H1 (cell line): ENCODE measurements at regions of chr6 and their contacts with region 1.

Region 1: DNA sequence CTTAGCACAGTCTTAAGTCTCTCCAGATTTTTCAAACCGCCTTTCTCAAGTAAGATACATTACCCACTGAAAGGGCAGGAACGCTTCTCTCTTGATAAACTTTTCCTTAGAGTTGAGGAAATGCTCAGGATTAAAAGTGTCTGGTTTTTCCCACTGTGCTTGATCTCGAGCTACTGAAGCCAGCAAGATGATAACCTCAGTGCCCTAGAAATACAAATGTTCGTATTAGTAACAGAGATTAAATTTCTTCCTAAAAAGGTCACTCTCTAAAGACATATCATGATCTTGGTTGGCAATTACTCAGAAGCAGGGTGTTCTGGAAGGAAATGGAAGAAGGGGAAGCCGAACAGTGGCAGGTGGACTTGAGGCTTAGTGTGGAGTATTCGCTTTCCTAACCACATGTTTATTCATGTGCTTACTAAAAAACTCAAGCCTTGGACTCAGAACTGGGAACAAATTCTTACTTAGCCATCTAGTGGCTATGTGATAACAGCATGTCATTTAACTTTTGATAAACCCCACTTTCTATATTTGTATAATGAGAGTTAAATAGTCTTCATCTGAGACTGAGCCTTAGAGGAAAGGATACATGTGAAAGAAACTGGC is 20.1 kb downstream of the C6orf141 start:
- DNase-seq: no peak
- H3K4me3 ChIP-seq: no peak overlapping the region
- H3K27ac ChIP-seq: no peak overlapping the region
- H3K4me1 ChIP-seq: no peaks in the 10 kb centered on the region
- H3K27me3 ChIP-seq: no peaks in the 10 kb centered on the region; a peak in 1 of 7 replicates
- CTCF ChIP-seq: no peak
- EP300 ChIP-seq: no peak
- POLR2A ChIP-seq: no peak
- RAD21 ChIP-seq: no peak

Region 2: DNA sequence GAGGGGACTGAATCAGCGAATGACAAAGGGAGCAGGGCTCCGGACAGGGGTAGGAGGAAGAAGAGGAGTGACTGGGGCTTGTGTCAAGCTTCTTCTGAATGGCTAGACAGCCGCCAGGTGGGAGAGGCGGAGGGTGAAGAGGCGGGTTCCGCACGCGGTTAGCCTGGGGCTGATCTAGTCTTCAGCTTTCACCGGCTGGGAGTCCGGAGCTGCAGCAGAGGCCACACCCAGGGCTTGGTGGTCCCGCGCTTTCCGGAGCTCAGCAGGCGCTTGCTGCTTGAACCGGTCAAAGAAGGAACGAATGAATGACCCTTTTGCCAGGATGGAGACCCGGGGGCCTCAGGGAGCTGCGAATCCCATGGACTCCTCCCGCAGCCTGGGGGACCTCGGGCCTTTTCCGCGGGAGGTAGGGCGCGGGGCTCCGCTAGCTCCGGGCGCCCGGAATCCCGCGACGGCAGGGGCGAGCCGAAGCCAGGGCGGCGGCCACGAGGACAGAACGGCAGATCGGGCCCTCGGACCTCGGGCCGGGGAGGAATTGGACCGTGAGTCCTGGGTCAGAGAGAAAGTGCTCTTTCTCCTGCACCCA is 20.0 kb before region 1 on chr6 and contains the start of gene C6orf141:
- CTCF ChIA-PET with region 1: interaction called, 23 read pairs
- POLR2A ChIA-PET with region 1: interaction called, 5 read pairs
- DNase-seq: peak; percentile 74 to 81
- H3K4me3 ChIP-seq: peak within 1 kb of the TSS; percentile 69 to 97 (median 79)
- H3K27ac ChIP-seq: peak within 1 kb of the TSS; percentile 76
- H3K4me1 ChIP-seq: peaks cover 4 to 25% (median 9%) of the 10 kb centered on the region in 4 experiments
- H3K27me3 ChIP-seq: peaks cover 0 to 4% (median 0%) of the 10 kb centered on the region in 4 experiments; a peak in 3 of 7 replicates
- CTCF ChIP-seq: no peak
- EP300 ChIP-seq: no peak
- POLR2A ChIP-seq: peak in 1 of 2 experiments; percentile 68; a peak in 2 of 3 replicates
- RAD21 ChIP-seq: no peak
- total RNA-seq, gene C6orf141: 16.1 and 17.6 TPM in 2 replicates

Region 3: DNA sequence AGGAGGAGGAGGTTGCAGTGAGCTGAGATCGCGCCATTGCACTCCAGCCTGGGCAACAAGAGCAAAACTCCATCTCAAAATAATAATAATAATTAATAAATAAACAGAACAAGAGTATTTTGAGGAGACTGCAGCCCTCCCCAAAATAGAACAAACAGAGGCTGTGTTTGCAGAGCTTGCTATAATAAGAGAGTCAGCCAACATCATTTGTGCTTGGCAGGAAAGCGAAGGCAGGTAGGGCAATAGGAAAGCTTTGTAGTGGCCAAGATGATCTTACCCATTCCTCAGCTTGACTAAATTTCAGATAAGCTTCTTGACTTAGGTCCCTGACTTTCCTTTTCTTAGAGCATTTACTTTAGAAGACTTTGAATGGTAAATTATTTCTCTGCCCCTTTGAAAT is 13.4 kb before region 1 on chr6:
- CTCF ChIA-PET with region 1: interaction called, 4 read pairs
- POLR2A ChIA-PET with region 1: interaction called, 11 read pairs
- DNase-seq: no peak
- H3K4me3 ChIP-seq: no peak overlapping the region
- H3K27ac ChIP-seq: no peak overlapping the region
- H3K4me1 ChIP-seq: peaks cover 0 to 7% (median 2%) of the 10 kb centered on the region in 4 experiments; a peak in 3 of 7 replicates
- H3K27me3 ChIP-seq: peaks cover 0 to 10% (median 1%) of the 10 kb centered on the region in 4 experiments; a peak in 4 of 7 replicates
- CTCF ChIP-seq: no peak
- EP300 ChIP-seq: no peak
- POLR2A ChIP-seq: no peak
- RAD21 ChIP-seq: no peak

Region 4: DNA sequence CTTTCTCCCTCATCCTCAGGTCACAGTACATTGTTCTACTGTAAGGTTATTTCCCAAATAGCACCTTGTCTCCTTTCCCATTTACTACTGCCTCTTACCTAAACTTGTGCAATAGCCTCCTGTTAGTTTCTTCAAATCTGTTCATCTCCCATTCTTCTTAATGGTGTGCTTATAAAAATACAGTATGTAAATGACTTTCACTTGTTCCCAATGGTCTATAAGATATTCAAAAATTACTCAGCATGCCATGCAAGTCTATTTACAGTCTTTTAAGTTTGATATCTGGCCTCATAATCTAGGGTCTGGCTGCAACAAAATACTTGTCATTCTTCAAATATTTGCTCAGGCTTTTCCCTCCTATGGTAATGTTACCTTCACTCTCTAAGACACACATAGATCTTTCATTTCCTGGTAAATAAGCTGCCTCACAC is 97.5 kb after region 1 on chr6:
- CTCF ChIA-PET with region 1: no interaction called
- POLR2A ChIA-PET with region 1: no interaction called
- DNase-seq: no peak
- H3K4me3 ChIP-seq: no peak overlapping the region
- H3K27ac ChIP-seq: no peak overlapping the region
- H3K4me1 ChIP-seq: peaks cover 0 to 9% (median 3%) of the 10 kb centered on the region in 4 experiments; a peak in 2 of 7 replicates
- H3K27me3 ChIP-seq: no peaks in the 10 kb centered on the region
- CTCF ChIP-seq: no peak
- EP300 ChIP-seq: no peak
- POLR2A ChIP-seq: no peak
- RAD21 ChIP-seq: no peak

Region 5: DNA sequence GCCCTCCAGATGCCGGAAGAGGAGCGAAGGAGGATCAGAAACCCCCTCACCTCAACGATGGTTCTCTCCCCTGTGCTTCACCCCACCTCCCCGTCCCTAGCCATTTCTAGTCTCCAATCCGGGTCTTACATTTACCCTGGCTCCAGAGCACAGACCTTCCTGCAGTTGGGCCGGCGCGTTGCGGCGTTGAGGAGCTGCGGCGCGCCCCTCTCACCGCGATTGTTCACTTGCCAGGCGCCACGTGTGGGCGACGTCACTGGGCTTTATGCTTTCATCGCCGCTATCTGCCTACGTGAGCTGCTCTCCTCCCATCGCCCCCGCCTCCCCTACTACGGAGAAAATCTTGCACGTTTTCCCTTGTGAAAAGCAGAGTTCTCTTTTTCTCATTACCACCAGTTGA is 142.8 kb after region 1 on chr6 and contains the start of gene CRISP2:
- CTCF ChIA-PET with region 1: no interaction called
- POLR2A ChIA-PET with region 1: no interaction called
- DNase-seq: no peak
- H3K4me3 ChIP-seq: no peak within 1 kb of the TSS
- H3K27ac ChIP-seq: no peak within 1 kb of the TSS
- H3K4me1 ChIP-seq: no peaks in the 10 kb centered on the region
- H3K27me3 ChIP-seq: no peaks in the 10 kb centered on the region; a peak in 1 of 7 replicates
- CTCF ChIP-seq: no peak
- EP300 ChIP-seq: no peak
- POLR2A ChIP-seq: no peak
- RAD21 ChIP-seq: no peak
- total RNA-seq, gene CRISP2: not detected in 2 replicates